B cell (primary cell): ENCODE measurements at regions of chr14 and their contacts with region 1.

Region 1: GRCh38 chr14:23567192-23568020 is at the start of gene AP1G2:
- DNase-seq: peak; percentile 91
- ATAC-seq: peak; percentile 95
- H3K4me3 ChIP-seq: peak within 1 kb of the TSS; percentile 56 to 94 (median 80)
- H3K4me3 Mint-ChIP-seq: peak within 1 kb of the TSS; percentile 96
- H3K27ac ChIP-seq: peak within 1 kb of the TSS; percentile 71 to 72
- H3K27ac Mint-ChIP-seq: peak within 1 kb of the TSS; percentile 96
- H3K4me1 ChIP-seq: peaks cover 15 to 23% of the 10 kb centered on the region in 2 donors
- H3K4me1 Mint-ChIP-seq: peaks cover 36% of the 10 kb centered on the region
- H3K27me3 ChIP-seq: peaks cover 0 to 8% (median 3%) of the 10 kb centered on the region in 4 experiments
- H3K27me3 Mint-ChIP-seq: peaks cover 11% of the 10 kb centered on the region
- CTCF ChIP-seq: no peak
- total RNA-seq, gene AP1G2: 627 and 648 TPM in 2 replicates

Region 2: GRCh38 chr14:22908601-22909000 is 658.8 kb before region 1 on chr14:
- CTCF ChIA-PET with region 1: no interaction called
- POLR2A ChIA-PET with region 1: no interaction called
- intact Hi-C with region 1: no loop called
- DNase-seq: no peak
- ATAC-seq: no peak
- H3K4me3 ChIP-seq: no peak overlapping the region
- H3K4me3 Mint-ChIP-seq: no peak overlapping the region
- H3K27ac ChIP-seq: no peak overlapping the region
- H3K27ac Mint-ChIP-seq: no peak overlapping the region
- H3K4me1 ChIP-seq: no peaks in the 10 kb centered on the region
- H3K4me1 Mint-ChIP-seq: peaks cover 12% of the 10 kb centered on the region
- H3K27me3 ChIP-seq: no peaks in the 10 kb centered on the region
- H3K27me3 Mint-ChIP-seq: no peaks in the 10 kb centered on the region
- CTCF ChIP-seq: no peak

Region 3: GRCh38 chr14:23469127-23469905 is 98.1 kb before region 1 on chr14 and contains the start of gene NGDN:
- CTCF ChIA-PET with region 1: interaction called, 335 read pairs
- POLR2A ChIA-PET with region 1: no interaction called
- intact Hi-C with region 1: loop called (anchors 1 kb)
- DNase-seq: peak; percentile 98
- ATAC-seq: peak; percentile 93
- H3K4me3 ChIP-seq: peak within 1 kb of the TSS; percentile 77 to 94 (median 92)
- H3K4me3 Mint-ChIP-seq: no peak within 1 kb of the TSS
- H3K27ac ChIP-seq: peak within 1 kb of the TSS; percentile 86 to 87
- H3K27ac Mint-ChIP-seq: no peak within 1 kb of the TSS
- H3K4me1 ChIP-seq: peaks cover 11 to 15% of the 10 kb centered on the region in 2 donors
- H3K4me1 Mint-ChIP-seq: peaks cover 7% of the 10 kb centered on the region
- H3K27me3 ChIP-seq: no peaks in the 10 kb centered on the region
- H3K27me3 Mint-ChIP-seq: peaks cover 7% of the 10 kb centered on the region
- CTCF ChIP-seq: peak; percentile 86
- total RNA-seq, gene NGDN: 81.8 and 84.4 TPM in 2 replicates

Region 4: GRCh38 chr14:23539248-23540140 is 27.9 kb before region 1 on chr14:
- CTCF ChIA-PET with region 1: interaction called, 80 read pairs
- POLR2A ChIA-PET with region 1: no interaction called
- intact Hi-C with region 1: no loop called
- DNase-seq: peak; percentile 55
- ATAC-seq: peak; percentile 74
- H3K4me3 ChIP-seq: no peak overlapping the region
- H3K4me3 Mint-ChIP-seq: no peak overlapping the region
- H3K27ac ChIP-seq: no peak overlapping the region
- H3K27ac Mint-ChIP-seq: no peak overlapping the region
- H3K4me1 ChIP-seq: no peaks in the 10 kb centered on the region
- H3K4me1 Mint-ChIP-seq: no peaks in the 10 kb centered on the region
- H3K27me3 ChIP-seq: peaks cover 0 to 5% (median 0%) of the 10 kb centered on the region in 4 experiments
- H3K27me3 Mint-ChIP-seq: peaks cover 3% of the 10 kb centered on the region
- CTCF ChIP-seq: peak; percentile 78

Region 5: DNA sequence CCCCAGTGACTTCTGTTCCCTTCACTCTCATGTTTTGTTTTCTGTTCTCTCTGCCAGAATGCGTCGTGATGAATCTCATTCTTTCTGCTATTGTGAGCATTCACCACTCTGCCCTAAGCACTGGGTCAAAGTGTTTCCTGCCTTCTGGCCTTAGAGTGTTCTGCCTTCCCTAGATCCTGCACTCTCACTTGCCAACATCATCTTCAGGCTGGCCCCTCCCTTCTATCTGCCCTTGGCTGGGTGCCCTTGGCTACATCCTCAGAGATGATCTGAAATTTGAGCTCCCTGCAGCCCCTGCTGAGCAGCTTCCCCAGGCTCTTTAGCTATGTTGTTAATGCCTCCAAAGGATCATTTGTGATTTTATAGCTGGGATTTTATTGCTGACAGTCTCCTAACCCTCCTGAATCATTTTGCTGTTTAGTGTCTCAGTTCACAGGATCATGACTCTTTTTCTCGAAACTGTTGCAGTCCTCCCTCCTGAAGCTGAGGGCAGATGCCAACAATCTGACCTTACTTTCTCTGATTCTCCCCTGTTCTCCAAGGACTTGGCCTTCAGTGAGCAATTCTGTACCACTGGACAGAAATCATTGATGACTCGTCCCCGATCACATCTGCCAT is 73.2 kb after region 1 on chr14:
- CTCF ChIA-PET with region 1: no interaction called
- POLR2A ChIA-PET with region 1: no interaction called
- intact Hi-C with region 1: no loop called
- DNase-seq: no peak
- ATAC-seq: no peak
- H3K4me3 ChIP-seq: no peak overlapping the region
- H3K4me3 Mint-ChIP-seq: no peak overlapping the region
- H3K27ac ChIP-seq: no peak overlapping the region
- H3K27ac Mint-ChIP-seq: no peak overlapping the region
- H3K4me1 ChIP-seq: no peaks in the 10 kb centered on the region
- H3K4me1 Mint-ChIP-seq: no peaks in the 10 kb centered on the region
- H3K27me3 ChIP-seq: peaks cover 0 to 6% (median 0%) of the 10 kb centered on the region in 4 experiments
- H3K27me3 Mint-ChIP-seq: peaks cover 7% of the 10 kb centered on the region
- CTCF ChIP-seq: no peak

Region 6: DNA sequence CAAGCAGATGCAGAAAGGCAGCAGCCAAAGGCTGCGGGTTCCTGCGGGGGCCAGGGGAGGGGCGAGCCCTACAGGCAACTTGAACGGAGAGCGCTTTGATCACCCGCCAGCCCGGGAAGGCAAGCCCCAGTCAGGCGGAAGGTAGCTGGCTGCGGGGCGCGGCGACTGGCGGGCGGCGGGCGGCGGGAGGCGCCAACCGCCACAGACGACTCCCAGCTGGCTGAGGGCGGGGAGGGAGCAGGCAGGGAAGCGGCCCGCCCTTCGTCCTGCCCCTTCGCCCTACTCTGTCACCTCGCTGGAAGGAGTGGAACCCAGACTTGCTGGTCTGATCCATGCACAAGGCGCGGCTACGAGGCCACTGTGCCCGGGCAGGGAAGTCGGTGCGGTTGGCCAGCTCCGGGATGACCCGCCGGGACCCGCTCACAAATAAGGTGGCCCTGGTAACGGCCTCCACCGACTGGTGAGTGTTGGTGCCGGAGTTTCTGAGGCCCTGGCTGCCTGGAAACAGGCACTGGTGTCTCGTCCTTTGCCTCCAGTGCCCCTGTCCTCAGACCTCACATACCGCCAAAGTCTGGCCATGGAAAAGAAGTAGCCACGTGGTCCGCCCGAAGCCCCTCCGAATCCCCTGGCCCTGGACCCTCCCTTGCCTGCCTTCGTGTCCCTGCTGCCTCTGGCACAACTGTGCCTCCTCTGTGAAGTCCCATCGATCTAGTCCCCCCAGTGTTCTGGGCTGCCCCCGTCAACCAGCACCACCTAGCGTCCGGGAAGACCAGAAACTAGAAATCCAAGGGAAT is 469.0 kb after region 1 on chr14:
- CTCF ChIA-PET with region 1: no interaction called
- POLR2A ChIA-PET with region 1: no interaction called
- intact Hi-C with region 1: loop called (anchors 10 kb)
- DNase-seq: peak; percentile 75
- ATAC-seq: peak; percentile 92
- H3K4me3 ChIP-seq: peak overlapping the region; percentile 34 to 77 (median 59)
- H3K4me3 Mint-ChIP-seq: peak overlapping the region; percentile 98
- H3K27ac ChIP-seq: peak overlapping the region; percentile 33 to 38
- H3K27ac Mint-ChIP-seq: peak overlapping the region; percentile 87
- H3K4me1 ChIP-seq: peaks cover 0 to 9% of the 10 kb centered on the region in 2 donors
- H3K4me1 Mint-ChIP-seq: peaks cover 10% of the 10 kb centered on the region
- H3K27me3 ChIP-seq: no peaks in the 10 kb centered on the region
- H3K27me3 Mint-ChIP-seq: no peaks in the 10 kb centered on the region
- CTCF ChIP-seq: peak; percentile 68

Region 7: DNA sequence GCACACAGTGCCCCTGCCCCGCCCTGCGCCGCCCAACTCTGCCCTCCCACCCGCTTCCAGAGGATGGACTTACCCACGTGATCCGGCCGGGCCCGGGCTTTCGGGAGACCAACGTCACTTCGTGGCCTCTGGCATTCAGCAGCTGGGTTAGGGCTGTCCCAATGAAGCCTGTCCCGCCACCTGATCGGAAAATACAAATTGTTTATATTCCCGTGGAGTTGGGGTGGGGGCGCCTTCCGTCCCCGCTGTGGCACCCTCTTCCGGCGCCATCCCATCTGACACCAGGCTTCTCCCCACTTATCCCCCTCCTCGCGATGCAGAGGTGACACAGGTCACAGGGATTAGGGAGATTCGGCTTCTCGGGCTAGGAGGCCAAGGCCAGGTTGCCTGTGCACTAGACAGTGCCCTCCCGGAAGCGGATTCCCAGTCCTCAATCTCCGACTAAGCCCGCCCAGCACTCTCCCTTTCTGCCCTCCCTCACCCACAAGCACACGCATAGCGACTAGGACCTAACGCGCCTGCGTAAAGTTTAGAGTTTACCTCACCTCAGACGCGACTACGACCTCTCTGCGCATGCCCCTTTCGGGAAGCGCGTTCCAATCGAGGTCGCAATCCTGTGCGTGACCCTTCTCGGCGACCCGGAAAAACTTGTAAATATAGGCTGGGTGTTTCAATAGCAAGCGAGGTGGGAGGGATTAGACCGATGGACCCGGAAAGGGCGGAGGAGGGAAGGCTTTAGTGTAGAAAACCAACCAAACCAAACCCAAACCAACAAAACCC is 875.1 kb after region 1 on chr14 and contains the start of gene SDR39U1:
- CTCF ChIA-PET with region 1: no interaction called
- POLR2A ChIA-PET with region 1: no interaction called
- intact Hi-C with region 1: loop called (anchors 5 kb)
- DNase-seq: peak; percentile 99
- ATAC-seq: peak; percentile 89
- H3K4me3 ChIP-seq: peak within 1 kb of the TSS; percentile 86 to 98 (median 94)
- H3K4me3 Mint-ChIP-seq: peak within 1 kb of the TSS; percentile 97
- H3K27ac ChIP-seq: peak within 1 kb of the TSS; percentile 96
- H3K27ac Mint-ChIP-seq: peak within 1 kb of the TSS; percentile 98
- H3K4me1 ChIP-seq: peaks cover 20 to 29% of the 10 kb centered on the region in 2 donors
- H3K4me1 Mint-ChIP-seq: peaks cover 48% of the 10 kb centered on the region
- H3K27me3 ChIP-seq: no peaks in the 10 kb centered on the region
- H3K27me3 Mint-ChIP-seq: no peaks in the 10 kb centered on the region
- CTCF ChIP-seq: no peak
- total RNA-seq, gene SDR39U1: 107 and 126 TPM in 2 replicates